ENCODE measurements at regions of chr3 and their contacts with region 1.

Region 1: GRCh38 chr3:10693460-10693859 is 122.6 kb upstream of the SLC6A11 start:
- DNase-seq: no peak
- H3K4me3 ChIP-seq: no peak overlapping the region
- H3K27ac ChIP-seq: no peak overlapping the region
- H3K4me1 ChIP-seq: no peaks in the 10 kb centered on the region
- H3K27me3 ChIP-seq: no peaks in the 10 kb centered on the region
- CTCF ChIP-seq: no peak
- POLR2A ChIP-seq: no peak

Region 2: DNA sequence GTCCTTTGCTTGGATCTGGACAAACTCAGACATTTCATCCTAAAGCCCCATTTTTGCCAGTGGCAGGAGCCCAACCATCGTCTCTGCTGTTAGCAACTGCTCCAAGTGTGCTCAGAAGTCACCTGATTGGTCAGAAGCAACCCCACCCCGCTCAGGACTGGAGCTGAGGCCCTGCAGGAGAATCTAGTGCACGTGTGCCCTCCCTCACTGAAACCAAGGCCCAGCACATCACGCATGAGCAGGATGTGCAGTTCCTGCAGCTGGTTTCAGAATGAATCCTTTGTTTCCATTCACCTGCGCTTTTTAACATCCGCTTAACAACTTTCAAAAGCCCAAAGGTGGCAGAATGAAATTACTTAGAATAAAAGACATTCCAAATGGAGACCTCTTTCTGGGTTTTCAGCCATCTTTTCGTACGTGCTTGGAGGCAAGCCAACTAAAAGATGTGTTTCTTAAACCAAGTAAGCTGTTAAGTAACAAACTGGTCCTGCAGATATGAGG is 1525.2 kb before region 1 on chr3:
- intact Hi-C with region 1: loop called (anchors 10 kb)
- DNase-seq: peak in 1 of 2 donors; percentile 63
- H3K4me3 ChIP-seq: no peak overlapping the region
- H3K27ac ChIP-seq: peak overlapping the region; percentile 65 to 75
- H3K4me1 ChIP-seq: peaks cover 0 to 15% of the 10 kb centered on the region in 2 donors
- H3K27me3 ChIP-seq: no peaks in the 10 kb centered on the region
- CTCF ChIP-seq: no peak
- POLR2A ChIP-seq: no peak

Region 3: GRCh38 chr3:11415099-11415498 is 721.6 kb after region 1 on chr3:
- intact Hi-C with region 1: no loop called
- DNase-seq: no peak
- H3K4me3 ChIP-seq: no peak overlapping the region
- H3K27ac ChIP-seq: no peak overlapping the region
- H3K4me1 ChIP-seq: no peaks in the 10 kb centered on the region
- H3K27me3 ChIP-seq: no peaks in the 10 kb centered on the region
- CTCF ChIP-seq: no peak
- POLR2A ChIP-seq: no peak

Region 4: GRCh38 chr3:12325586-12326515 is 1632.4 kb after region 1 on chr3:
- intact Hi-C with region 1: loop called (anchors 10 kb)
- DNase-seq: no peak
- H3K4me3 ChIP-seq: no peak overlapping the region
- H3K27ac ChIP-seq: peak overlapping the region in 1 of 2 donors; percentile 9
- H3K4me1 ChIP-seq: no peaks in the 10 kb centered on the region
- H3K27me3 ChIP-seq: no peaks in the 10 kb centered on the region
- CTCF ChIP-seq: no peak
- POLR2A ChIP-seq: no peak